ENCODE measurements at regions of chr17 and their contacts with region 1.

Region 1: DNA sequence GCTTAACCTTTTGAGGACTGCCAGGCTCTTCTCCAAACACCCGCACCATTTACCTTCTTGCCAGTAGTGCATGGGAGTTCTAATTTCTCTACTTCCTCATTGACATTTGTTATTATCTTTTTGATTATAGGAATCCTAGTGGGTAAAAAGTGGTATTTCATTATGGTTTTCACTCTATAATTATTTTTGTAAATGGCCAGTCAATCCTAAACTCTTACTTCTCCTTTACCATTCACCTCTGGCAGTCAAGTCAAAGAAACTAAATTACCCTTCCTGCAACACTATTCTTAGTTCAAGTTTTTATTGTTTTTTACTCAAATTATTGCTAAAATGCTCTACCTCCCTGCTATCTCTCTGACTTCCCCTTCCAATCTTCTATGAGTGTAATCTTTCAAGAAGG is 29.8 kb upstream of the ANKFY1 start:
- DNase-seq: no peak
- H3K4me3 ChIP-seq: no peak overlapping the region
- H3K27ac ChIP-seq: no peak overlapping the region
- H3K4me1 ChIP-seq: no peaks in the 10 kb centered on the region
- H3K27me3 ChIP-seq: no peaks in the 10 kb centered on the region
- CTCF ChIP-seq: no peak
- POLR2A ChIP-seq: no peak

Region 2: GRCh38 chr17:4412933-4413831 is 119.6 kb after region 1 on chr17:
- CTCF ChIA-PET with region 1: interaction called, 4 read pairs
- POLR2A ChIA-PET with region 1: no interaction called
- dilution Hi-C with region 1: no loop called
- intact Hi-C with region 1: loop called (anchors 10 kb)
- DNase-seq: peak; percentile 85
- H3K4me3 ChIP-seq: no peak overlapping the region
- H3K27ac ChIP-seq: no peak overlapping the region
- H3K4me1 ChIP-seq: no peaks in the 10 kb centered on the region
- H3K27me3 ChIP-seq: no peaks in the 10 kb centered on the region
- CTCF ChIP-seq: peak; percentile 84 to 95
- POLR2A ChIP-seq: no peak

Measured in endothelial cell of umbilical vein (primary cell).